Tibial artery (tissue), 4 donors: ENCODE measurements at regions of chr6 and their contacts with region 1.

Region 1: GRCh38 chr6:89368107-89368506 is 15.6 kb upstream of the UBE2J1 start:
- DNase-seq: peak; percentile 67 to 72
- H3K4me3 ChIP-seq: no peak overlapping the region
- H3K27ac ChIP-seq: no peak overlapping the region
- H3K4me1 ChIP-seq: peaks cover 0 to 15% (median 7%) of the 10 kb centered on the region in 4 donors
- H3K27me3 ChIP-seq: no peaks in the 10 kb centered on the region
- CTCF ChIP-seq: peak; percentile 71 to 77

Region 2: DNA sequence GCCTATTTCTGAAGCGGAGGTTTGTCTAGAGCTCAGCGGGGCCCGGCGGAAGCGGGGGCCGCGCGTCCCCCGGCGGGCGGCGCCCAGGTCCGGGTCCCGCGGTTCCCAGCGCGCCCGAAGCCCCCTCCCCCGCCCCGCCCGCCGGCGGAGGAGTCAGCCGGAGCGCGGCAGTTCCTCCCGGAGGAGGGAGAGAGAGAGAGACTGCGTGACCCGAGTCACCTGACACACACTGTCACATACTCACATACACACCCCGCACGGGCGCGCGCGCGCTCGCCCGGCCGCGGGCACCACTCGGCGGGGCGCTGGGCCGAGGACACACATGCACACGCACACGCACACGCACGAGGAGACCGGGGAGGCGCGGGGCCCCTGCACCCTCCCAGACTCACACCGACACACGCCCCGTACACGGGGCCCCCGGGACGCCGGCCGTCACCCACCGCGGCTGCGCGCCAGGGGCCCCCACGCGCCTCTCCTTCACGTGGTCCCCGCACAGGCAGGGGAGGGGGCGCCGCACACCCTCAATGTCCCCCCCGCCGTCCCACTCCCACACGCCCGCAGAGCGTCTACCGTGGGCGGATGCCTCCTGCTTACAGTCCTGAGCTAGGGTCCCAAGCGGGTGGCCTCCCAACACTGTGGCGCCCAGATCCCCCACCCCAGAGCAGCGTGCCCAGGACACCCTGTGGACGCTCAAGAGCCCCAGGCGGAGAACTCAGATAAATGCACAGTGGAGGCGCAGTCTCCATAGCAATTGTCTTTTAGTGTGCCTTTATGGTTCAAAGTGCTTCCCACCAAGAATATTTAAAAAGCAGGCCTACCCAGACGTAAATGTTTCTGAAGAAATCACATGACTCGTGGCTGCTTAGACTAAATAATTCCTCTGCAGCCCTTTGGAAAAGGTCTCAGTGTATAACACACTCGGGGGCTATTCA is 44.2 kb after region 1 on chr6 and contains the start of gene RRAGD:
- intact Hi-C with region 1: loop called (anchors 10 kb)
- DNase-seq: peak; percentile 81 to 89
- H3K4me3 ChIP-seq: peak within 1 kb of the TSS; percentile 67 to 95
- H3K27ac ChIP-seq: peak within 1 kb of the TSS; percentile 78 to 85
- H3K4me1 ChIP-seq: peaks cover 0 to 24% (median 7%) of the 10 kb centered on the region in 4 donors
- H3K27me3 ChIP-seq: no peaks in the 10 kb centered on the region
- CTCF ChIP-seq: no peak

Region 3: GRCh38 chr6:89829591-89830385 is 461.7 kb after region 1 on chr6 and contains the start of gene CASP8AP2:
- intact Hi-C with region 1: no loop called
- DNase-seq: peak; percentile 96 to 97
- H3K4me3 ChIP-seq: peak within 1 kb of the TSS; percentile 72 to 79
- H3K27ac ChIP-seq: peak within 1 kb of the TSS; percentile 84 to 90
- H3K4me1 ChIP-seq: peaks cover 0 to 20% (median 13%) of the 10 kb centered on the region in 4 donors
- H3K27me3 ChIP-seq: no peaks in the 10 kb centered on the region
- CTCF ChIP-seq: no peak